Activated CD4-positive, alpha-beta T cell treated with anti-CD3 and anti-CD28 coated beads, Interleukin-2, amount 10 ng/mL, durations not matched to agents 24 days and 14 days (primary cell): ENCODE measurements at regions of chr1 and their contacts with region 1.

Region 1: DNA sequence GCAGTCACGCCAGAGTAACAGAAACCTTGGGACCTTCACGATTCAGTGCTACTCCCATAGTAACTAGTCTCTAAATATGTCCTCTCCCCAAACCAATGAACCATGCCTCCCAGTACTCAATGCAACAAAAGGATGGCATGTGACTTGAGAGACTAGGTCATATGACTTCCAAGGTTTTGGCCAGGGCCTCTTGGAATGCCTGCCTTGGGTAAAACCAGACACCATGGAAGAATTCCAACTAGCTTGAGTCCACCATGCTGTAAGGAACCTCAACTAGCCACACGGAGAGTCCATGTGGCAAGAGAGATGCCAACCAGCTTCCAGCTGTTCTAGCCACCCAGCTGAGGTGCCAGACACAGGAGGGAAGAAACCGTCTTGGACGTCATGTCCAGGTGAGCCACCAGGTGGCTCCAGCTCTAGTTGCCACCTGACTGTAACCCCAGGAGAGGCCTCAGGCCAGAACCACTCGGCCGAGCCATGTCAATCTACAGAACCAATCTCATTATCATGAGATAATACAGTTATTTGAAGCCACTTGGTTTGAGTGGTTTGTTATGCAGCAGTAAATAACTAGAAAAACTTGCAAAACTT is 115.0 kb downstream of the SYF2 start:
- DNase-seq: peak; percentile 72
- H3K4me3 Mint-ChIP-seq: no peak overlapping the region
- H3K27ac Mint-ChIP-seq: no peak overlapping the region
- H3K4me1 Mint-ChIP-seq: peaks cover 21% of the 10 kb centered on the region
- H3K27me3 Mint-ChIP-seq: peaks cover 18% of the 10 kb centered on the region

Region 2: DNA sequence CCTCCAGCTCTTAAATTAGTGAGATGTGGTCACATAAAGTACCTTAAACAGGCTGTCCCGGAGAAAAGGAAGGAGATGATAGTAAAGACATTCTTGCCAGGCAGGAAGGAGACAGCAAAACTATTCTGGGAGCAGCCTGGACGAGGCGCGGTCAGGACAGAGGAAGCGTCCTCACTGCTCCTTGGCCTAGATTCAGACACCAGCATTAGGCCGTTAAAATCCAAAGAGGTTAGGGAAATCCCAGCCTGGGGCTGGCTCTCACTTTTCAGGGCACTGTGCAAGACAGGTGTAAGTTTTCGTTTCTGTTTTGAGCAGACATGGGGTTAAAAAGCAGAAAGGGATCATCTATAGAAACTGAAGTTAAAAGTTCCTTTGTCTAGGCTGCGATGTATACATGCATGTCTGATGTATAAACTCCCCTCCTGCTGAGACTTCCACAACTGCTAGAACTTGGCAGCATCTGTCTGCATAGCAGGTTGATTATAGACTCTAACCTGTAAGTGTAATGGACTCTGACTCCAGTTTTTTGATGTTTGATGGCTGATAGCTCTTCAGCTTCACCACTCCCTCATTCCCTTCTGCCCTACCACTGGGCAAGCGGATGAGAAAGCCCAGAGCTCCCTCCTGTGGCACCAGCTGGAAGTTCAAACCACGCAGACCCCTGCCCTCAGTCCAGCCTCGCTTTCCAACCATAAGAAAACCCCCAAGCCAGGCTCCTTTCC is 725.3 kb before region 1 on chr1:
- intact Hi-C with region 1: no loop called
- DNase-seq: peak; percentile 88
- H3K4me3 Mint-ChIP-seq: peak overlapping the region; percentile 79
- H3K27ac Mint-ChIP-seq: peak overlapping the region; percentile 87
- H3K4me1 Mint-ChIP-seq: peaks cover 29% of the 10 kb centered on the region
- H3K27me3 Mint-ChIP-seq: no peaks in the 10 kb centered on the region

Region 3: GRCh38 chr1:25080294-25081209 is 36.8 kb before region 1 on chr1:
- intact Hi-C with region 1: no loop called
- DNase-seq: no peak
- H3K4me3 Mint-ChIP-seq: no peak overlapping the region
- H3K27ac Mint-ChIP-seq: no peak overlapping the region
- H3K4me1 Mint-ChIP-seq: peaks cover 1% of the 10 kb centered on the region
- H3K27me3 Mint-ChIP-seq: peaks cover 23% of the 10 kb centered on the region

Region 4: DNA sequence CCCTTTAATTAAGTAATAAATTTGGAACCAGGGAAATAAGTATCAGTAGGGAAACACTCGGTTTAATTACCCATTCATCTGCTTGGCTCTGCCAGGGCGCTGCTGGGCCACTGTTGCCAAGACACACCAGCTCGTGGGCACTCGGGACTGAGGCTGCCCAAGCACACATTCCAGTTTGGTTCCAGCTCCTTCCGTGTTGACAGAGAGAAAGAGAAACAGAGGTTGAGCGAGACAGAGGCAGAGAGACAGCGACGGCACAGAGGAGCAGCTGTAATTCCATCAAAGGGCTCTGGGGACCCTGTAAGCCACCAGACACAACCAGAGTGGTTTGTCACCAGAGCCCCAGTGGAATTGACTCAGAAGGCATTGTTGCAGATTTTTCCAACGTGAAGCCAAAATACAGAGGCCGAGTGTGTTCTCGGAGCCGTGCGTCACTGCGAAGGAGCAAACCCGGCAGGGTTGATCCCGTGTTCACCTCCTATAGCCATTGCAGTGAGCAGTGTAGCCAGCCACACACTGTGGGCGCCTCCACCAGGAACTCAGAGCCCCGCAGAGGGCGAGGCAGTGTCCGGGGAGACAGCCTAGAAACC is 81.4 kb after region 1 on chr1:
- intact Hi-C with region 1: loop called (anchors 5 kb)
- DNase-seq: no peak
- H3K4me3 Mint-ChIP-seq: no peak overlapping the region
- H3K27ac Mint-ChIP-seq: no peak overlapping the region
- H3K4me1 Mint-ChIP-seq: peaks cover 2% of the 10 kb centered on the region
- H3K27me3 Mint-ChIP-seq: peaks cover 5% of the 10 kb centered on the region